ENCODE measurements at regions of chr6 and their contacts with region 1.

Region 1: DNA sequence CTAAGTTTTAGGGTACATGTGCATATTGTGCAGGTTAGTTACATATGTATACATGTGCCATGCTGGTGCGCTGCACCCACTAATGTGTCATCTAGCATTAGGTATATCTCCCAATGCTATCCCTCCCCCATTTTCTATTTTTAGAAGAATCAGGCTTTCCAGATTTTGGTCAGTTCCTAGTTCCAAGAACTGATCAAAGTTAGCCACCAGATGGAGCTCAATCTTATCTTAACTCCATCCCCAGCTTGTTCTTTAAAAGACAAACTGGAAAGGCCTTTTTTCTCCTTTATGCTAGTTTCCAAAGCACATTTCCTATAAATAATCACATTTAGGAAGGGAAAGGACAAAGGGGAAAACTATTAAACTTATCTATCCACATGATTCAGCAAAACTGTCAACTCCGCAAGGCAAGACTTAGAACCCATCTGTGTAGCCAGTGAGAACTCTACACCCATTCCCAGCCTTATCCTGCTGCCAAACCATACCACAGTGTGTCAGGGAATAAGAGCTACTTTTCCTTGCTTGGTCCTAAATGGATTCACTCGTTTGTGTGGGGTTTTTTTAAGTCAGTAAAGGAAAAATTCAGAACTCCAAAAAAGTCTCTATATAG is 22.8 kb upstream of the KHDC1 start:
- DNase-seq: peak; percentile 60
- H3K4me3 ChIP-seq: no peak overlapping the region
- H3K27ac ChIP-seq: no peak overlapping the region
- H3K4me1 ChIP-seq: peaks cover 16% of the 10 kb centered on the region
- H3K27me3 ChIP-seq: no peaks in the 10 kb centered on the region
- CTCF ChIP-seq: peak; percentile 19 to 34
- POLR2A ChIP-seq: no peak

Region 2: DNA sequence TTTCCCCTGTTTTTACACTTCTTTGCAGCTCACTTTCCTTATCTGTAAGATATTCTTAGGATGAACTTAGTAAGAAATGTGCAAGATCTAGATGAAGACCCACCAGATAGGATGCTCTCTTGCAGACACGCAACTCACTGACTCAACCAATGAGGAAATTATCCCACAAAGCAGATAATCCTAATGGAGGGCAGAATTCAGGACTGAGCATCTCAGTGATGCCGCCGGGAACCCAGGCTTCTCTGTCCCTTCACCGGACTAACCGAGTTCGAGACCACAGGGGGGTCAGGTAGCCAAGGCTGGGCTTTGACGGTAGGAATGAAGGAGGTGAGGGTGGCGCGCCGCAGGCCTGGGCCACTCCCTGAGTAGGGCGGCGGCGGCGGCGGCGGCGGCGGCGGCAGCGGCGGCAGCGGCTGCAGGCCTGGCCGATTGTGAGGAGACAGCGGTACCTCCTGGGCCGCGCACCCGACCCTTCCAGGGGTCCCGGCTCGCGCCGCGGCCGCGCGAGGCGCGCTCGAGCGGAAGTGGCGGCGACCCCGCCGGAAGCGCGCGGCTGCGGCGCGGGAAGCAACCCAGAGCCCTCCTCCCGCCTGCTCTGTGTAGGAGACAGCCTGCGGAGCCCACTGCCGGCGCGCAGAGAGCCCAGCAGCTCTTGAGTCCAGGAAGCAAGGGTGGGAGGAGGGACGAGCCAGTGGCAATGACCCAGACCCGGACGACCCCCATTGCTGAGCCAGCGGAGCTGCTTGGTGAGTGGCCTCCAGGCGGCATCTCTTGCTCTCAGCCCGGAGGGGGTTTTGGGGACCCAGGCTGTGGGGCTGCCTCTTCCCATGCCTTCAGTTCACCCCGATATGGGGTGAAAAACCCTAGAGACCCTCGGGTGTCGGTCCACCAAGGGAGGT is 22.9 kb before region 1 on chr6 and contains the start of gene KHDC1:
- CTCF ChIA-PET with region 1: interaction called, 5 read pairs
- POLR2A ChIA-PET with region 1: no interaction called
- dilution Hi-C with region 1: no loop called
- intact Hi-C with region 1: loop called (anchors 2 kb)
- DNase-seq: peak; percentile 44
- H3K4me3 ChIP-seq: peak within 1 kb of the TSS; percentile 56 to 67 (median 60)
- H3K27ac ChIP-seq: peak within 1 kb of the TSS; percentile 12
- H3K4me1 ChIP-seq: peaks cover 15% of the 10 kb centered on the region
- H3K27me3 ChIP-seq: no peaks in the 10 kb centered on the region
- CTCF ChIP-seq: no peak
- POLR2A ChIP-seq: peak; percentile 28
- total RNA-seq, gene KHDC1: 3.3 and 3.7 TPM in 2 replicates

Region 3: GRCh38 chr6:73299151-73299971 is 13.6 kb after region 1 on chr6:
- CTCF ChIA-PET with region 1: interaction called, 11 read pairs
- POLR2A ChIA-PET with region 1: no interaction called
- dilution Hi-C with region 1: no loop called
- intact Hi-C with region 1: no loop called
- DNase-seq: no peak
- H3K4me3 ChIP-seq: peak overlapping the region in 1 of 3 experiments; percentile 25
- H3K27ac ChIP-seq: no peak overlapping the region
- H3K4me1 ChIP-seq: no peaks in the 10 kb centered on the region
- H3K27me3 ChIP-seq: no peaks in the 10 kb centered on the region
- CTCF ChIP-seq: no peak
- POLR2A ChIP-seq: no peak

Region 4: GRCh38 chr6:73309769-73310502 is 24.2 kb after region 1 on chr6:
- CTCF ChIA-PET with region 1: interaction called, 57 read pairs
- POLR2A ChIA-PET with region 1: no interaction called
- dilution Hi-C with region 1: no loop called
- intact Hi-C with region 1: loop called (anchors 1 kb)
- DNase-seq: peak; percentile 68
- H3K4me3 ChIP-seq: peak overlapping the region; percentile 60 to 83 (median 71)
- H3K27ac ChIP-seq: peak overlapping the region; percentile 19
- H3K4me1 ChIP-seq: peaks cover 12% of the 10 kb centered on the region
- H3K27me3 ChIP-seq: peaks cover 3 to 4% of the 10 kb centered on the region in 2 experiments
- CTCF ChIP-seq: peak; percentile 54 to 69
- POLR2A ChIP-seq: peak; percentile 86

Region 5: DNA sequence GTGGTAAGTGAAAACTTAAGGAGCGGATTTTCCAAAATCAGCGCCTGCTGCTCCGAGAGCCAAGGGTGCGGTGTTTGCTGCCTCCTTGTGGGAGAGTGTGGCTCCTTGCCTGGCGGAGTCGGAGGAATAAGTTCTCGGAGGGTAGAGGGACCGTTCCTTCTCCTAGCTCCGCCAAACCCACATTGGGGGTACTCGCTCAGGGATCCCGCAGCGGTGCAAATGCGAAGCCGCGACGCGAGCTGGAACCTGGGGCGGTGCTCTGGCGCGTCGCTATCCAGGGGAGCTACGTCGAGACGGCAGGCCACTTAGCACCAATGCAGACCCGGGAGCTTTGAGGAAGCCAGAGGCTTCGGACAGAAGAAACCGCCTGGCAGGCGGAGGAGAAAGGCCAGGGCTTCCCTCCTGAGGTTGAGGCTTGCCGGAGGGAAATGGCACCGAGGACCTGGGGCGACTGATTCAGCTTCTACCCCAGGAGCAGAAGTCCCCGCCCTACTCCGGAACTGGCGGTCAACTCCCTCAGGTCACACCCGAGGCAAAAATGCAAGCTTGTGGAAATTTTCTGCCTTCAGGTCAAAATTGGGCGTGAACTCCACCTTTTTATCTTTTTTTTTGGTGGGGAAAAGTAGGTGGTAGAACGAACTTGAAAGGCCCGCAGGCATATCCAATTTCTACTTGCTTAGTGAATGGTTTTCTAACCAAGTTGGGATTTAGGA is 103.2 kb after region 1 on chr6:
- CTCF ChIA-PET with region 1: interaction called, 26 read pairs
- POLR2A ChIA-PET with region 1: no interaction called
- dilution Hi-C with region 1: no loop called
- intact Hi-C with region 1: loop called (anchors 5 kb)
- DNase-seq: peak; percentile 64
- H3K4me3 ChIP-seq: peak overlapping the region; percentile 35 to 41 (median 37)
- H3K27ac ChIP-seq: no peak overlapping the region
- H3K4me1 ChIP-seq: peaks cover 10% of the 10 kb centered on the region
- H3K27me3 ChIP-seq: no peaks in the 10 kb centered on the region
- CTCF ChIP-seq: peak; percentile 60 to 69
- POLR2A ChIP-seq: no peak

Region 6: DNA sequence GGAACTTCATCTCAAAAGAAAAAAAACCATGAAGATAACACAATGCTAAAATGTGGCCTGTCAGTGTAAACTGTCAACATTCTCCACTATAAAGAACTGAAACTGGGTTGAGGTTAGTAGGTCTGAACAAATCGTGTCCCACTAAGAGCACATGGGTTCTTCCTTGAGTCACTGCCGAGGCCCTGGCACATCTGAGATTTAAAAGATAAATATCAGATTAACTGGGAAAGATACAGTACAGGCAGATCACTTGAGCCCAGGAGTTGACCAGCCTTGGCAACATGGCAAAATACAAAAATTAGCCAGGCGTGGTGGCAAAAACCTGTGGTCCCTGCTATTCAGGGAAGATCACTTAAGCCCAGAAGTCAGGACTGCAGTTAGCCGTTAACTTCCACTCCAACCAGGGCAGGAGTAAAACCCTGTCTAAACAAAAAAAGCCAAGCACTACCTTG is 229.5 kb after region 1 on chr6:
- CTCF ChIA-PET with region 1: no interaction called
- POLR2A ChIA-PET with region 1: no interaction called
- dilution Hi-C with region 1: no loop called
- intact Hi-C with region 1: no loop called
- DNase-seq: no peak
- H3K4me3 ChIP-seq: no peak overlapping the region
- H3K27ac ChIP-seq: peak overlapping the region; percentile 6
- H3K4me1 ChIP-seq: peaks cover 15% of the 10 kb centered on the region
- H3K27me3 ChIP-seq: no peaks in the 10 kb centered on the region
- CTCF ChIP-seq: no peak
- POLR2A ChIP-seq: no peak

Region 7: DNA sequence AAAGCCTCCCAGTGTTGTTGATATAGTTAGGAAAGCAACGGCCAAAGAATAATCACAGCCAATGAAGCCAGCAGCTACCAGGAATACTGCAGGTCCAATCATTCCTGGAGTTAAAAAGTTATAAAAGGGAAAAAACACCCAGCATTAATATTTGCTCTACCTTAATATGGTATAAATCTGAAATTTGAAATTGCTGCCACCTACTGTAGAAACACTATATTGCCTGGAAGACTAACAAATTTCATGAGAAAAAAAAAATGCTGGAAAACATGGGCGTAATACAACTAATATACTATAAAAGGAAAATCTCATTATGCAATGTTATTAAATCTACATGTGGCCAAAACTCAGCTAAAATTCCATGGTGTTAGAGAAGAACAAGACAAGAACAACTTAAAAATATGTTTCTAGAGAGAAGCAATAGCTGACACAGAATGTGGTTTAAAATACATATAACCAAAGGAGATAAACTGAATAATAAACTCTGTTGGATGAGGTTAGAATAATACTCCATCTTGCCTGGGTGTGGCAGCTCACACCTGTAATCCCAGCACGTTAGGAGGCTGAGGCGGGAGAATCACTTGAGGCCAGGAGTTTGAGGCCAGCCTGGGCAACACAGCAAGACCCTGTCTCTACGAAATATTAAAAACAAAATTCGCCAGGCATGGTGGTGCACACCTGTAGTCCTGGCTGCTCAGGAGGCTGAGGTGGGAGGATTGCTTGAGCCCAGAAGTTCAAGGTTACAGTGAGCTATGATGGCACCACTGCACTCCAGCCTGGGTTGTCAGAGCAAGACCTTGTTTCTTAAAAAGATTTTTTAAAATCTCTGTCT is 324.9 kb after region 1 on chr6:
- CTCF ChIA-PET with region 1: no interaction called
- POLR2A ChIA-PET with region 1: no interaction called
- dilution Hi-C with region 1: no loop called
- intact Hi-C with region 1: loop called (anchors 1 kb)
- DNase-seq: peak; percentile 77
- H3K4me3 ChIP-seq: no peak overlapping the region
- H3K27ac ChIP-seq: no peak overlapping the region
- H3K4me1 ChIP-seq: no peaks in the 10 kb centered on the region
- H3K27me3 ChIP-seq: no peaks in the 10 kb centered on the region
- CTCF ChIP-seq: peak; percentile 28 to 31
- POLR2A ChIP-seq: no peak

Region 8: GRCh38 chr6:74259981-74260380 is 974.2 kb after region 1 on chr6:
- CTCF ChIA-PET with region 1: no interaction called
- POLR2A ChIA-PET with region 1: no interaction called
- dilution Hi-C with region 1: no loop called
- intact Hi-C with region 1: no loop called
- DNase-seq: no peak
- H3K4me3 ChIP-seq: no peak overlapping the region
- H3K27ac ChIP-seq: no peak overlapping the region
- H3K4me1 ChIP-seq: no peaks in the 10 kb centered on the region
- H3K27me3 ChIP-seq: no peaks in the 10 kb centered on the region
- CTCF ChIP-seq: no peak
- POLR2A ChIP-seq: no peak

Measured in endothelial cell of umbilical vein (primary cell).